Activated CD8-positive, alpha-beta T cell treated with anti-CD3 and anti-CD28 coated beads, Interleukin-2, amount 10 ng/mL, durations not matched to agents 7 days and 5 days (primary cell): ENCODE measurements at regions of chr16 and their contacts with region 1.

Region 1: GRCh38 chr16:11423315-11424117 is 78.3 kb downstream of the RMI2 start:
- DNase-seq: no peak
- ATAC-seq: peak; percentile 42
- H3K4me3 Mint-ChIP-seq: no peak overlapping the region
- H3K27ac Mint-ChIP-seq: no peak overlapping the region
- H3K4me1 Mint-ChIP-seq: peaks cover 14% of the 10 kb centered on the region
- H3K27me3 Mint-ChIP-seq: no peaks in the 10 kb centered on the region

Region 2: GRCh38 chr16:11396241-11397048 is 27.1 kb before region 1 on chr16:
- CTCF ChIA-PET with region 1: interaction called, 11 read pairs
- POLR2A ChIA-PET with region 1: no interaction called
- DNase-seq: peak; percentile 73
- ATAC-seq: peak; percentile 74
- H3K4me3 Mint-ChIP-seq: no peak overlapping the region
- H3K27ac Mint-ChIP-seq: peak overlapping the region; percentile 14
- H3K4me1 Mint-ChIP-seq: no peaks in the 10 kb centered on the region
- H3K27me3 Mint-ChIP-seq: no peaks in the 10 kb centered on the region